AG04450 (cell line): ENCODE measurements at regions of chr3 and their contacts with region 1.

Region 1: GRCh38 chr3:110436209-110436608 is 635.4 kb upstream of the NECTIN3 start:
- DNase-seq: no peak
- H3K4me3 ChIP-seq: no peak overlapping the region
- H3K27ac ChIP-seq: no peak overlapping the region
- H3K27me3 ChIP-seq: no peaks in the 10 kb centered on the region
- CTCF ChIP-seq: no peak

Region 2: GRCh38 chr3:110420158-110420641 is 16.0 kb before region 1 on chr3:
- CTCF ChIA-PET with region 1: no interaction called
- POLR2A ChIA-PET with region 1: no interaction called
- DNase-seq: peak; percentile 55
- H3K4me3 ChIP-seq: peak overlapping the region; percentile 40
- H3K27ac ChIP-seq: peak overlapping the region; percentile 79
- H3K27me3 ChIP-seq: no peaks in the 10 kb centered on the region
- CTCF ChIP-seq: no peak

Region 3: GRCh38 chr3:110974902-110975301 is 538.7 kb after region 1 on chr3:
- CTCF ChIA-PET with region 1: interaction called, 12 read pairs
- POLR2A ChIA-PET with region 1: no interaction called
- DNase-seq: no peak
- H3K4me3 ChIP-seq: no peak overlapping the region
- H3K27ac ChIP-seq: no peak overlapping the region
- H3K27me3 ChIP-seq: no peaks in the 10 kb centered on the region
- CTCF ChIP-seq: no peak